ENCODE measurements at regions of chr10 and their contacts with region 1.

Region 1: DNA sequence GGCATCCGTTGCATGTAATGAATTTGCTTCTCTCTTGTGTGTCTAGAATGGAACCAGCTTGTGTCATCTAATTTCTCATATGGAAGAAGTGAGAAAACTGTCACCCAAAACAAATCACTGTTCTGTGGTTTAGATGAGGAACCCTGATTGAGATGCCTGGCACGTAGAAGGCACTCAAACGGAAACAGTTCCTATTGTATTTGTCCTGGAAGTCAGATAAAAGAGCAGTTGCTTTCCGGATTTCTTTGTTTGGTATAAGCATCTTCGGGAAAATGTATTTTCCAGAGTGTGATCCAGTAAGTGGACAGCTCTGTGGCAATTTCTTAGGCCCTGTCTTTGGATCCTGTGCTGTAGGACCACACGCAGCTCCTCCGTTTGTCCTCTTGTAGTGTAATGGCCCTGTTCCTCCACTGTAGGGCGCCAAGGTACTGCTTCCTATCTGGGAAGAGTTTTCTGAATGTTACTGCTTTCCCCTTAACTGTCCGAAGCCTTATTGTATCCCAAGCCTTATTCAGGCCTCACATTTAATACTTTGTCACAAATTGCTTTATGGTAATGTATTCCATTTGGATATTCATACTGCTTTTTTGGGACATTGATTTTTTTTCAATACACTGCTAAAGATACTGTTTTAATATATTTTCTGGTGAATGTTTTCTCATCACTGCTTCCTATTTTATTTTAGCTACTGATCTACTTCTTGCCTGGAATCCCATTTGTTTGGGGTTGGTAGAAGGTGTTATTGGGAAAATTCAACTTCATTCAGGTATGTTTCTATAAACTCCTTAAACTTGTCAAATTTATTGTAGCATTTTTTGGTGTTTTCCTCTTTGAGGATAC is 24.8 kb downstream of the INPP5F start:
- H3K4me3 Mint-ChIP-seq: no peak overlapping the region
- H3K27ac Mint-ChIP-seq: no peak overlapping the region
- H3K4me1 Mint-ChIP-seq: peaks cover 8% of the 10 kb centered on the region
- H3K27me3 Mint-ChIP-seq: no peaks in the 10 kb centered on the region

Region 2: GRCh38 chr10:119634219-119634544 is 116.4 kb before region 1 on chr10:
- intact Hi-C with region 1: no loop called
- H3K4me3 Mint-ChIP-seq: no peak overlapping the region
- H3K27ac Mint-ChIP-seq: no peak overlapping the region
- H3K4me1 Mint-ChIP-seq: peaks cover under 1% of the 10 kb centered on the region
- H3K27me3 Mint-ChIP-seq: peaks cover 2% of the 10 kb centered on the region

Region 3: DNA sequence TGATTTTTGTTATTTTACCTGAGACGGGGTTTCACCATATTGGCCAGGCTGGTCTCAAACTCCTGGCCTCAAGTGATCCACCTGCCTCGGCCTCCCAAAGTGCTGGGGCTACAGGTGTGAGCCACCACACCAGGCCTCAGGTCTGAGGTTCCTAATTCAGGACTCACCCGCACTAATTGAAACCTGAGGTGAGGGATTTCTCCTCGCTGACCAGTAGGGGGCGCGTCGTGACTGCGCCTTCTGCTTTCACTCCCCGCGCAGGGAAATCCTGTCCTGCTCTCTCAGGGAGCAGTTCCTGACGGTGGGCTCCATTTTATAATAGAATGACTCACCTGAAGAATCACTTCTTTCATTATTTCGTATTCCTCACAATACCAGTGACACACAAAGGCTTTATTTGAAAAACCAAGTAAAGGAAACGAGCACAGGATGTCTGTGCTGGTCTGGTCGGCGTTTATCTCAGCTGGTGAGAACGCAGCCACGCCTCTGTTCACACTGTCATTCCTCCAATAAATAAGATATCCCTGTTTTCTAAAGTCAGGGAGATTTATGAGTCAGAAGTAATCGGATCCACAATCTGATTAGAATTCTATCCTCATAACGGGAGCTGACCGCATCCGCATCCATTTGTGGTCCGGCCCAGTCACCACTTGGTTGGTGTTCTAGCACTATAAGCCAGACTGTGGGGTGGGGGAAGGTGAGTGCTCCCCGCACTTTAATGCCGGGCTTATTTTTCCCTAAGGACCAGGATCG is 64.0 kb before region 1 on chr10:
- intact Hi-C with region 1: loop called (anchors 2 kb)
- H3K4me3 Mint-ChIP-seq: peak overlapping the region; percentile 30
- H3K27ac Mint-ChIP-seq: no peak overlapping the region
- H3K4me1 Mint-ChIP-seq: peaks cover 31% of the 10 kb centered on the region
- H3K27me3 Mint-ChIP-seq: peaks cover 22% of the 10 kb centered on the region

Region 4: GRCh38 chr10:119807960-119808697 is 57.5 kb after region 1 on chr10:
- intact Hi-C with region 1: loop called (anchors 10 kb)
- H3K4me3 Mint-ChIP-seq: no peak overlapping the region
- H3K27ac Mint-ChIP-seq: no peak overlapping the region
- H3K4me1 Mint-ChIP-seq: no peaks in the 10 kb centered on the region
- H3K27me3 Mint-ChIP-seq: no peaks in the 10 kb centered on the region

Region 5: DNA sequence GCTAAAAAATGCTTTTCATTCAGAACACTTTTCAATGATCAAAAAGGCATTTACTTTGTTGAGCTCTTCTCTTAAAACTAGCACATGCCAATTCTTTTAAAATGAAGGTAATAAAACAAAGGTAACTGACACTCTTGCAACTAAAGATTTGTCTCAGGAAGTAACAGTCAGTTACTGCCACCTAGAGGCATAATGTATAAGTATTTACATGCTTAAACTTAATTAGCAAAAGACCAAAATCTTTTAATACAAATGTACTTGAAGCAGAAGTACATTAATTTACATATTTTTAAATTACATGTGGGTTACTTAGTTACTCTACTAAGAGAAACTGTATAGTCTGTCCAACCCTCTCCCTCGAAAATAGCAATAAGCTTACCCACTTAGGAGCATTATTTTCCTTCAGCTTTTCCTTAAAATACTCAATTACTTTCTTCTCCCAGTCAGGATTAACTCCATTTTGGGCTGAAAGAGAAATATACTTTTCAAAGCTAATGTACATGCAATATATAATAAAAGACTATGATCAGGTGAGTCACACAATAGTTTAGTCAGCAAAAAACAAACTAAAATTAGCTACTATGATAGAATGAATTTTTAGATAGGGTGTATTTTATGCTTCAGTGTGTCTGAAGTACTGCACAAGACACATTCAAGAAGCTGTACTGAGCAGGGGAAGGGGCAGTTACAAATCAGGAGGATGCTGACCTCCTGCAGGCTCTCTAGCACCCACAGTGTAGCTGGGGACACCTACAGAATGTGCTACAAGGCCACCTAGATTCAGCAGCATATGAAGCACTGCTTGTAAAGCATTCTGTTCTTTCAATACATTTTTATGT is 109.0 kb after region 1 on chr10:
- intact Hi-C with region 1: loop called (anchors 1 kb)
- H3K4me3 Mint-ChIP-seq: no peak overlapping the region
- H3K27ac Mint-ChIP-seq: no peak overlapping the region
- H3K4me1 Mint-ChIP-seq: peaks cover 21% of the 10 kb centered on the region
- H3K27me3 Mint-ChIP-seq: no peaks in the 10 kb centered on the region

Region 6: DNA sequence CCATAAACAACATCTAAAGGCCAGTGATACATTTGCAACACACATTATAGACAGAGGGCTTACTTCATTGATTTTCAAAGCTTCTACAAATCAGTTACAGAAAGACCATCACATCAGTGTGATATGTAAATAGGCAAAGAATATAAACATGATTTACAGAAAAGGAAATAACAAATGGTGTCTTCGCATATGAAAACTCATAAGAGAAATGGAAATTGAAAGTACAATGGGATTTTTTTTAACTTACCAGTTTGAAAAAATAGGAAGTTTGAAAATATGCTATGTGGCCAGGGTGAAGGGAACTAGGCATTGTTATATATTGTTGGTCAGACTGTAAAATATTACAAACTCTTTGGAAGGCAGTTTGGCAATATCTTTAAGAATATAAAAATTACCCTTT is 169.2 kb after region 1 on chr10:
- intact Hi-C with region 1: loop called (anchors 5 kb)
- H3K4me3 Mint-ChIP-seq: no peak overlapping the region
- H3K27ac Mint-ChIP-seq: peak overlapping the region; percentile 70
- H3K4me1 Mint-ChIP-seq: peaks cover 8% of the 10 kb centered on the region
- H3K27me3 Mint-ChIP-seq: no peaks in the 10 kb centered on the region

Region 7: GRCh38 chr10:120336911-120337540 is 586.4 kb after region 1 on chr10:
- intact Hi-C with region 1: loop called (anchors 2 kb)
- H3K4me3 Mint-ChIP-seq: no peak overlapping the region
- H3K27ac Mint-ChIP-seq: no peak overlapping the region
- H3K4me1 Mint-ChIP-seq: no peaks in the 10 kb centered on the region
- H3K27me3 Mint-ChIP-seq: no peaks in the 10 kb centered on the region